ENCODE measurements at regions of chr1 and their contacts with region 1.

Region 1: DNA sequence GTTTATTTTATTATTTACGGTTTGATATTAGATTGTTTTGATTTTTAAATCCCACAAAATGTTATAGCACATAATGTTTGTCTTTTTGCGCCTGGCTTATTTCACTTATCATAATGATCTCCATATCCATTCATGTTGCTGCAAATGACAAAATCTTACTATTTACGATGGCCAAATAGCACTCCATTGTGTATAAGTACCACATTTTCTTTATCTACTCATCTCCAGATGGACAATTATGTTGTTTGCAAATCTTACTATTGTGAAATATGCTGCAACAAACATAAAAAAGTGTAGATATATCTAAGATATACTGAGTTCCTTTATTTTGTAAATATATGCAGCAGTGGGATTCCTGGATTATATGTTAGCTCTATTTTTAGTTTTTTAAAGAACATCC is 1568.3 kb downstream of the AMY1C start:
- DNase-seq: no peak
- ATAC-seq: no peak
- H3K4me3 ChIP-seq: no peak overlapping the region
- H3K27ac ChIP-seq: no peak overlapping the region
- H3K4me1 ChIP-seq: no peaks in the 10 kb centered on the region
- H3K27me3 ChIP-seq: no peaks in the 10 kb centered on the region
- CTCF ChIP-seq: no peak

Region 2: DNA sequence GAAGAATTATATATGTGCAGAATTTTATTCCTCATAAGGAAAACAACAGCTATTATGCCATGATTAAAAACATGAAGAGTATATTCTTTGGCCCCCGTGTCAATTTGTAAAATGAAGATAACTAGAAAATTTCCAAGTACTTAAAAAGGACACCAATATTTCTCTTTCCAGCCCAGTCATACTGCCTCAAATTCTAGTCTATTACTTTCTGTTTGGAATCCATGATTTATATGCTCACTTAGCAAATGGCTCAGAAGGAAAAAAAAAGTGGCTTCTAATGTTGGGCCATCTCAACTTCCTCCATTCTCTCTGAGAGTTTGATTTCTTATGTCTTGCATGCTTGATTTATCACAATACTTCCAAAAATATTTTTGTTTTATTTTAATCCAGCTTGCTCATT is 137.2 kb before region 1 on chr1:
- intact Hi-C with region 1: no loop called
- DNase-seq: no peak
- ATAC-seq: no peak
- H3K4me3 ChIP-seq: no peak overlapping the region
- H3K27ac ChIP-seq: no peak overlapping the region
- H3K4me1 ChIP-seq: no peaks in the 10 kb centered on the region
- H3K27me3 ChIP-seq: no peaks in the 10 kb centered on the region
- CTCF ChIP-seq: no peak

Region 3: GRCh38 chr1:105294838-105295237 is 23.1 kb before region 1 on chr1:
- intact Hi-C with region 1: loop called in 1 of 2 experiments (anchors 1 kb)
- DNase-seq: no peak
- ATAC-seq: no peak
- H3K4me3 ChIP-seq: no peak overlapping the region
- H3K27ac ChIP-seq: no peak overlapping the region
- H3K4me1 ChIP-seq: no peaks in the 10 kb centered on the region
- H3K27me3 ChIP-seq: no peaks in the 10 kb centered on the region
- CTCF ChIP-seq: no peak

Region 4: GRCh38 chr1:105565006-105565405 is 247.0 kb after region 1 on chr1:
- intact Hi-C with region 1: no loop called
- DNase-seq: no peak
- ATAC-seq: no peak
- H3K4me3 ChIP-seq: no peak overlapping the region
- H3K27ac ChIP-seq: no peak overlapping the region
- H3K4me1 ChIP-seq: no peaks in the 10 kb centered on the region
- H3K27me3 ChIP-seq: no peaks in the 10 kb centered on the region
- CTCF ChIP-seq: no peak